Heart left ventricle (tissue), 16 donors: ENCODE measurements at regions of chr1 and their contacts with region 1.

Region 1: GRCh38 chr1:150473659-150474058 is 13.6 kb upstream of the TARS2 start:
- DNase-seq: peak in 4 of 5 donors; percentile 34 to 60 (median 52)
- ATAC-seq: peak; percentile 51 to 84 (median 82)
- H3K4me3 ChIP-seq: no peak overlapping the region
- H3K27ac ChIP-seq: peak overlapping the region in 11 of 12 donors; percentile 11 to 73 (median 50)
- H3K4me1 ChIP-seq: peaks cover 0 to 47% (median 20%) of the 10 kb centered on the region in 12 donors
- H3K27me3 ChIP-seq: no peaks in the 10 kb centered on the region
- CTCF ChIP-seq: no peak
- POLR2A ChIP-seq: no peak

Region 2: GRCh38 chr1:150515328-150516048 is 41.8 kb after region 1 on chr1 and contains the start of gene FALEC:
- intact Hi-C with region 1: loop called in 1 of 10 experiments (anchors 5 kb)
- DNase-seq: peak; percentile 97 to 99 (median 98)
- ATAC-seq: peak; percentile 99
- H3K4me3 ChIP-seq: peak within 1 kb of the TSS; percentile 55 to 86 (median 63)
- H3K27ac ChIP-seq: peak within 1 kb of the TSS; percentile 72 to 93 (median 85)
- H3K4me1 ChIP-seq: peaks cover 0 to 16% (median 11%) of the 10 kb centered on the region in 12 donors
- H3K27me3 ChIP-seq: no peaks in the 10 kb centered on the region
- CTCF ChIP-seq: no peak
- POLR2A ChIP-seq: peak in 1 of 2 donors; percentile 65
- total RNA-seq, gene FALEC: 0.51 to 0.96 TPM in 2 of 9 donors, not detected in the others

Region 3: DNA sequence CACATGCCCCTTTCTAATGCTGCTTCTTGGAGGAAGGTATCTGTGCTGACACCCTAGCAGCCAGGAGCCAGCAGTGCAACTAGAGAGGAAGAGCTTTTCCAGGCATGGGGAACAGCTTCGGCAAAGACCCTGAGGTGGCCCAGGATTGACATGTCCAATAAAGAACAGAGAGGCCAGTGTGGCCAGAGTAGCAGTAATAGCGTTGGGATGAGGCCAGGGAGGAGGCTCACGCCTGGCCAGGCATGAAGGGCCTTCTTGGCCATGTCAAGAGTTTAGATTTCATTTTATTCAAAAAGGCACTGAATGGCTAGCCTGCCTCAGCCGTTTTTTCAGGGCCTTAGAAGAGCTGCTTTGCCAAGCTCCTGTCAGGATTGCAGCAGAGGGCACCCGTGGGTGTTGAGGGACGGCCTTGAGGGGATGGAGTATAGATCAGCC is 59.2 kb after region 1 on chr1:
- intact Hi-C with region 1: loop called in 5 of 10 experiments (anchors 5 kb)
- DNase-seq: peak in 1 of 5 donors; percentile 19
- ATAC-seq: no peak
- H3K4me3 ChIP-seq: peak overlapping the region in 1 of 12 donors; percentile 2
- H3K27ac ChIP-seq: peak overlapping the region in 11 of 12 donors; percentile 37 to 86 (median 74)
- H3K4me1 ChIP-seq: peaks cover 0 to 42% (median 9%) of the 10 kb centered on the region in 12 donors
- H3K27me3 ChIP-seq: no peaks in the 10 kb centered on the region
- CTCF ChIP-seq: peak in 5 of 12 donors; percentile 13 to 33 (median 31)
- POLR2A ChIP-seq: no peak

Region 4: DNA sequence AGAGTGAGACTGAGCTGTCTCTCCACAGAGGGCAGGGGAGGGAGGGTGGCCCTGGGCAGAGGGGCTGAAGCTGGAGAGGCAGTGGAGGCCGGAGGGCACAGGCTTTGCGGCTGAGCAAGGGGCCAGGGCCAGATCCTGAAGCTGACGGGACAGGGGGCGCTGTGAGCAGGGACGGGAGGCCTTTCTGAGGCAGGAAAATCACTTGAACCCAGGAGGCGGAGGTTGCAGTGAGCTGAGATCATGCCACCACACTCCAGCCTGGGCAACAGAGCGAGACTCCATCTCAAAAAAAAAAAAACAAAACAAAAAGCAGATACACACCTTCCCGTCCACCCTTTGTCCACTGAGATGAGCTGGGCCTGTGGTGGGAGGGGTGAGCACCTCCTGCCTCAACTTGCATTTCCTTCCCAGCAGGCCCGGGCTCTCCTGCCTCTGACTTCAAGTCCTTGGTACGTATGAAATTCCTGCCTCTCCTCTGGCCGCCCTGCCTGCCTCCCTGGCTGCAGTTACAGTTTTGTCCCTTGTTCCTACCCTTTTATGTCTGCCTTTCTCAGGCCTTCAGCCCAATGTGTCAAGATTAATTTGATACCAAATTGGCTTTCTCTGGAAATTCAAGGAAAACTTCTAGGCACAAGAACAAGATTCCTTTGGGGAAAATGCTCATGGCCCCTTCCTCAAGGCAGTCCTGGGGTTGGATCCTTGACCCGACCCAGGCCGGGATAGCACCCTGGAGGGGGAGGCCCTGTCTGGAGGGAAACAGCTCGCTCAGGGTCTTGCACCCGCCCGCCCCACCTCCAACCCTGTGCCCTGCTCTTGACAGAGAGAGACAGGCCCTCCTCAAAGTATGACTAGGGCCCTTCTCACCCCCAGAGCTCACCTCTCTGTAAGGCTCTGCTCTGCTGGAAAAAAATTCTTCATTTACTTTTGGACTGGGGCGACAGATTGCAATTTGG is 64.3 kb after region 1 on chr1:
- intact Hi-C with region 1: loop called in 5 of 10 experiments (anchors 5 kb)
- DNase-seq: no peak
- ATAC-seq: peak in 1 of 4 donors; percentile 8
- H3K4me3 ChIP-seq: no peak overlapping the region
- H3K27ac ChIP-seq: no peak overlapping the region
- H3K4me1 ChIP-seq: peaks cover 0 to 36% (median 2%) of the 10 kb centered on the region in 12 donors
- H3K27me3 ChIP-seq: no peaks in the 10 kb centered on the region
- CTCF ChIP-seq: no peak
- POLR2A ChIP-seq: no peak